CD4-positive, alpha-beta T cell (primary cell): ENCODE measurements at regions of chr4 and their contacts with region 1.

Region 1: DNA sequence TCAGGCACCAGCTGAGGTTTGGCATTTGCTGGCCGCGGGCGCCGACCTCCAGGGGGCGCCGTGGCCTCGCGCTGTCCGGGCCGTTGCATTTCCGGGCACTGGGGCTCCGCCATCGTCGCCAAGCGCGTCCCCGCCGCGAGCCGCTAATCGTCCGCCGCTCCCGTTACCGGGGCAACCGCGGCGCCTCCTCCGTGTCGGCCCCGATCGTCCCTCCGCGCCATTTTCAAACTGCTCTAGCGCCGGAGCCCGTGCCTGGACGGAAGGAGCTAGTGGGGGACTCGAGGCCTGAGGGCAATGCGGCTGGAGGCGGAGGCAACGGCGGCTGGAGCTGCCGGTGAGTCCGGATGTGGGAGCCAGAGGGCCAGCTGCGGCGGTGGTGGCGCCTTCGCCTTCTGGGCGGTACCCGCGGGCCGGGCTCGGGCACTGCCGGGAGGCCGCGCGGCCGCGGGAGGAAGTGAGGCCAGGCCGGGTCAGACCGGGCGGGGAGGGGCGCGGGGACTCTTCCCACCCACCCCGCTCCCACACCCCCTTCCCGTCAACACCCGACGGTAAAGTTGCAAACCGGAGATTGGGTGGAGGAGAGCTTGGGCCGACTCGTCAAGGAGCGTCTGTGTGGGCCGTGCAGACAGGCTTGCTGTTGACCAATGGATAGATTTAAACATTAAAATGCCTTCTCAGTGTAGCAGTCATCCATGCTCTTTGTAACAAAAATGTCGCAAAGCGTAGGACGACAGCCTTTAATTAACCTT is at the start of gene CEP135:
- DNase-seq: peak; percentile 83 to 96 (median 91)
- ATAC-seq: peak; percentile 68
- H3K4me3 ChIP-seq: peak within 1 kb of the TSS; percentile 74
- H3K4me3 Mint-ChIP-seq: peak within 1 kb of the TSS; percentile 90
- H3K27ac ChIP-seq: peak within 1 kb of the TSS; percentile 79 to 83
- H3K27ac Mint-ChIP-seq: peak within 1 kb of the TSS; percentile 96
- H3K4me1 ChIP-seq: peaks cover 26% of the 10 kb centered on the region
- H3K4me1 Mint-ChIP-seq: peaks cover 58% of the 10 kb centered on the region
- H3K27me3 ChIP-seq: no peaks in the 10 kb centered on the region
- H3K27me3 Mint-ChIP-seq: no peaks in the 10 kb centered on the region
- CTCF ChIP-seq: peak; percentile 95
- total RNA-seq, gene CEP135: 19.6 to 21.0 TPM

Region 2: GRCh38 chr4:55345980-55346850 is 602.7 kb before region 1 on chr4 and contains the start of gene SRD5A3:
- CTCF ChIA-PET with region 1: no interaction called
- POLR2A ChIA-PET with region 1: no interaction called
- intact Hi-C with region 1: loop called in 1 of 2 experiments (anchors 10 kb)
- DNase-seq: peak; percentile 47 to 87 (median 73)
- ATAC-seq: peak; percentile 83
- H3K4me3 ChIP-seq: peak within 1 kb of the TSS; percentile 70
- H3K4me3 Mint-ChIP-seq: peak within 1 kb of the TSS; percentile 89
- H3K27ac ChIP-seq: peak within 1 kb of the TSS; percentile 56 to 68
- H3K27ac Mint-ChIP-seq: peak within 1 kb of the TSS; percentile 72
- H3K4me1 ChIP-seq: peaks cover 11% of the 10 kb centered on the region
- H3K4me1 Mint-ChIP-seq: peaks cover 18% of the 10 kb centered on the region
- H3K27me3 ChIP-seq: no peaks in the 10 kb centered on the region
- H3K27me3 Mint-ChIP-seq: no peaks in the 10 kb centered on the region
- CTCF ChIP-seq: peak; percentile 99
- total RNA-seq, gene SRD5A3: 2.1 to 2.2 TPM

Region 3: GRCh38 chr4:55853484-55854046 is 95.3 kb before region 1 on chr4 and contains the start of gene EXOC1:
- CTCF ChIA-PET with region 1: interaction called, 5 read pairs
- POLR2A ChIA-PET with region 1: interaction called, 11 read pairs
- intact Hi-C with region 1: loop called (anchors 2 kb)
- DNase-seq: peak; percentile 93 to 99 (median 97)
- ATAC-seq: peak; percentile 95
- H3K4me3 ChIP-seq: peak within 1 kb of the TSS; percentile 96
- H3K4me3 Mint-ChIP-seq: no peak within 1 kb of the TSS
- H3K27ac ChIP-seq: peak within 1 kb of the TSS; percentile 68 to 86
- H3K27ac Mint-ChIP-seq: peak within 1 kb of the TSS; percentile 60
- H3K4me1 ChIP-seq: peaks cover 28% of the 10 kb centered on the region
- H3K4me1 Mint-ChIP-seq: peaks cover 33% of the 10 kb centered on the region
- H3K27me3 ChIP-seq: no peaks in the 10 kb centered on the region
- H3K27me3 Mint-ChIP-seq: no peaks in the 10 kb centered on the region
- CTCF ChIP-seq: no peak
- total RNA-seq, gene EXOC1: 15.2 to 15.7 TPM

Region 4: DNA sequence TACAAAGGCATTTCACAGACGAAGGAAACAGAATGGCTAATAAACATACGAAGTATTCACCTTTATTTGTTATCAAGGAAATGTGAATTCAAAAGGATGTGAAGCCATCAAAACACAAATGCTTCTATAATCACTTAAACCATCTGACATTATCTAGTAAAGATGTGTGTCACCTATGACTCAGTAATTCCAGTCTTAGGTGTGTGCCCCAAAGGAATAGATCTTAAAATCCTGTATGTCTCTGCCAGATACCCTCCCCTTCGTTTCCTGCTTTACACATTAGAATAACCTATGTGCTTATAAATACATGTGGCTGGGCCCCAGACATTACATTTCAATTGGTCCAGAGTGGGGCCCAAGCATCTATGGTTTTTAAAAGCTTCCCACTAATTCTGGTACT is 41.9 kb before region 1 on chr4:
- CTCF ChIA-PET with region 1: interaction called, 6 read pairs
- POLR2A ChIA-PET with region 1: interaction called, 23 read pairs
- intact Hi-C with region 1: loop called in 1 of 2 experiments (anchors 5 kb)
- DNase-seq: peak in 2 of 14 experiments; percentile 8 to 24
- ATAC-seq: peak; percentile 60
- H3K4me3 ChIP-seq: peak overlapping the region; percentile 13
- H3K4me3 Mint-ChIP-seq: peak overlapping the region; percentile 64
- H3K27ac ChIP-seq: no peak overlapping the region
- H3K27ac Mint-ChIP-seq: peak overlapping the region; percentile 58
- H3K4me1 ChIP-seq: no peaks in the 10 kb centered on the region
- H3K4me1 Mint-ChIP-seq: peaks cover 22% of the 10 kb centered on the region
- H3K27me3 ChIP-seq: no peaks in the 10 kb centered on the region
- H3K27me3 Mint-ChIP-seq: no peaks in the 10 kb centered on the region
- CTCF ChIP-seq: no peak

Region 5: DNA sequence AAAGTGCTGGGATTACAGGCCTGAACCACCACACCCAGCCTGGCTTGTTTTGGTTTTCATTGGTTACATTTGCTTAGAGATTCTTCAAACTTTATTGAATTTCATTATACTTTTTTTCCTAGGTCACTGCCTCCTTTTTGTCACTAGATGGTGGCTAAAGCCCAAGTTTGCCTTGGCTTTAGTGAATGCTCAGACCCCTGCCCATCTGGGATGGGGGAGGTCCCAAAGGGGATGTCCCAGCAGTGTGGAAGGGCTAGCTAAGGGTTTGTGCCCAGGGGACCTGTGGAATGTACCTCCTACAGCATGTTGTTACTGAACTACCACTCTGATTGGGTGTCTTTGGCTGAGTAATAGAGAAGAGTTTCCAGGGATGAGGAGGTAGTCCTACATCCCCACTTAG is 58.3 kb after region 1 on chr4:
- CTCF ChIA-PET with region 1: no interaction called
- POLR2A ChIA-PET with region 1: no interaction called
- intact Hi-C with region 1: no loop called
- DNase-seq: no peak
- ATAC-seq: no peak
- H3K4me3 ChIP-seq: no peak overlapping the region
- H3K4me3 Mint-ChIP-seq: no peak overlapping the region
- H3K27ac ChIP-seq: no peak overlapping the region
- H3K27ac Mint-ChIP-seq: no peak overlapping the region
- H3K4me1 ChIP-seq: no peaks in the 10 kb centered on the region
- H3K4me1 Mint-ChIP-seq: peaks cover 8% of the 10 kb centered on the region
- H3K27me3 ChIP-seq: no peaks in the 10 kb centered on the region
- H3K27me3 Mint-ChIP-seq: no peaks in the 10 kb centered on the region
- CTCF ChIP-seq: no peak

Region 6: DNA sequence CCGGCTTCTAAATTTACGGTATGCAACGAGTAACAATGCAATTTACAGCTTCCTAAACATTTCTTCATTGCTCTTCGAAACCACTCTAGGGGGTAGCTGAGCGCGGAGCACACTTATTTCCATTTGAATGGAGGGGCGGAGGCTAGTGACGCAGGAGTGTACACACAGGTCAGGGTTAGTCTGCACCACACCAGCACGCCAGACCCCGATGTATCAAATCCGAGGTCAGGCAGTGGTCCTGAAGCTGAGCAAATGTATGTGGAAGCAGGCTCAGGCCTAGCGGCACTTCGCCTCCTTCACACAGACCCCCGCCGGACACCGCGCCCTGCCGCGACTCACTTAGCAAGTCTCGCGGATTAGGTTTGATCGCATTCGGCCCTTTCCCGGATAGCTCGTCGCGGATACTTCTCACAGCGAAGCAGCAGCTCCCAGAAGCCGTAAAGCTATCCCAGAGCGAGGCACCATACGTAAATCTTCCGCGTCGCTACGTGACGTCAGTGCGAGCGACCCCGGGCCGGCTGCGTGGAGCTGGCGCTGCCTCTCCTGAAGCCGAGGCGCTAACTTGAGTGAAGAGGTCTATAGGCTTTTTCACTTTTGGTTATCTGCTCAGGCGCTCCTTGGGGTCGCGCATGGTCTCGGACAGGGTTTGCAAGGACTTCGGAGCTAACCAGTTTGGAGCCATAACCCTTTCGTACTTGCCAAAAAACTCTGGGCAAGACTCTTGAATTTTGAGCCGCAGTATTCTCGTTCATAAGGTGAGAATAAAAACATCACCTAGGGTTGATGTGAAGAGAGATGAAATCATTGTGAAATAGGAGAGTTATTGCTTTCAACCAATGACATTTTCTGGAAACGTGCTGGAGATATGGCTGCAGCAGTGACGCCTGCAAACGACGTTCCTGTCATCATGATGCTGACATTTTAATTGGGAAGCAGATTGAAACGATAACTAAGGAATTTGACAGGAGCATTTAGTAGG is 438.4 kb after region 1 on chr4 and contains the start of gene AASDH:
- CTCF ChIA-PET with region 1: interaction called, 9 read pairs
- POLR2A ChIA-PET with region 1: interaction called, 27 read pairs
- intact Hi-C with region 1: loop called in 1 of 2 experiments (anchors 2 kb)
- DNase-seq: peak; percentile 85 to 99 (median 96)
- ATAC-seq: peak; percentile 86
- H3K4me3 ChIP-seq: peak within 1 kb of the TSS; percentile 97
- H3K4me3 Mint-ChIP-seq: peak within 1 kb of the TSS; percentile 93
- H3K27ac ChIP-seq: peak within 1 kb of the TSS; percentile 91 to 97
- H3K27ac Mint-ChIP-seq: peak within 1 kb of the TSS; percentile 99
- H3K4me1 ChIP-seq: peaks cover 17% of the 10 kb centered on the region
- H3K4me1 Mint-ChIP-seq: peaks cover 46% of the 10 kb centered on the region
- H3K27me3 ChIP-seq: no peaks in the 10 kb centered on the region
- H3K27me3 Mint-ChIP-seq: no peaks in the 10 kb centered on the region
- CTCF ChIP-seq: no peak
- total RNA-seq, gene AASDH: 10.2 to 10.6 TPM

Region 7: GRCh38 chr4:56544573-56545131 is 595.8 kb after region 1 on chr4:
- CTCF ChIA-PET with region 1: no interaction called
- POLR2A ChIA-PET with region 1: no interaction called
- intact Hi-C with region 1: loop called in 1 of 2 experiments (anchors 5 kb)
- DNase-seq: peak; percentile 66 to 92 (median 85)
- ATAC-seq: peak; percentile 100
- H3K4me3 ChIP-seq: peak overlapping the region; percentile 41
- H3K4me3 Mint-ChIP-seq: peak overlapping the region; percentile 59
- H3K27ac ChIP-seq: no peak overlapping the region
- H3K27ac Mint-ChIP-seq: no peak overlapping the region
- H3K4me1 ChIP-seq: peaks cover 4% of the 10 kb centered on the region
- H3K4me1 Mint-ChIP-seq: peaks cover 21% of the 10 kb centered on the region
- H3K27me3 ChIP-seq: no peaks in the 10 kb centered on the region
- H3K27me3 Mint-ChIP-seq: peaks cover 9% of the 10 kb centered on the region
- CTCF ChIP-seq: peak; percentile 99

Region 8: GRCh38 chr4:56977321-56978012 is 1028.6 kb after region 1 on chr4 and contains the start of gene NOA1:
- CTCF ChIA-PET with region 1: interaction called, 3 read pairs
- POLR2A ChIA-PET with region 1: interaction called, 33 read pairs
- intact Hi-C with region 1: loop called (anchors 2 to 5 kb)
- DNase-seq: peak; percentile 95 to 99 (median 96)
- ATAC-seq: peak; percentile 80
- H3K4me3 ChIP-seq: peak within 1 kb of the TSS; percentile 99
- H3K4me3 Mint-ChIP-seq: peak within 1 kb of the TSS; percentile 96
- H3K27ac ChIP-seq: peak within 1 kb of the TSS; percentile 73 to 92
- H3K27ac Mint-ChIP-seq: peak within 1 kb of the TSS; percentile 95
- H3K4me1 ChIP-seq: peaks cover 54% of the 10 kb centered on the region
- H3K4me1 Mint-ChIP-seq: peaks cover 70% of the 10 kb centered on the region
- H3K27me3 ChIP-seq: no peaks in the 10 kb centered on the region
- H3K27me3 Mint-ChIP-seq: no peaks in the 10 kb centered on the region
- CTCF ChIP-seq: no peak
- total RNA-seq, gene NOA1: 14.3 to 15.6 TPM